Cardiac septum (tissue), 1 donor: ENCODE measurements at regions of chr12 and their contacts with region 1.

Region 1: DNA sequence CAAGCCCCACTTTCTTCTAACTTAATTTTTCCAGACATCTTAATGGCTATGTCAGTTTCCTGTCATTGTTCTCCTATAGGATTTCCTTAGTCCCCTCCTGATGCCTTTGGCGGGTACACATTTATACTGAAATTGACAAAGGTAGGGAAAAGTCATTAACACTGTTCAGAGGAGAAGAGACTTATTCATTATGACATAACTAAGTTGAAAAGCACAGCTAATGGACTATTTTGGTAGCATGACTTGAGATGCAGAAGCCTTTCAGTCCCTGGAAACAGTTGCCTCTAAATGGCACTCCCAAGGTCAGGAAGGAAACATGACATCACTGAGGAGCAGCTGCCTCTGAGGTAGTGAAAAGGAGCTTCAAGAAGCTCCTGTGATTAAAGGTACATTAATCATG is 317.5 kb upstream of the KITLG start:
- DNase-seq: no peak

Region 2: DNA sequence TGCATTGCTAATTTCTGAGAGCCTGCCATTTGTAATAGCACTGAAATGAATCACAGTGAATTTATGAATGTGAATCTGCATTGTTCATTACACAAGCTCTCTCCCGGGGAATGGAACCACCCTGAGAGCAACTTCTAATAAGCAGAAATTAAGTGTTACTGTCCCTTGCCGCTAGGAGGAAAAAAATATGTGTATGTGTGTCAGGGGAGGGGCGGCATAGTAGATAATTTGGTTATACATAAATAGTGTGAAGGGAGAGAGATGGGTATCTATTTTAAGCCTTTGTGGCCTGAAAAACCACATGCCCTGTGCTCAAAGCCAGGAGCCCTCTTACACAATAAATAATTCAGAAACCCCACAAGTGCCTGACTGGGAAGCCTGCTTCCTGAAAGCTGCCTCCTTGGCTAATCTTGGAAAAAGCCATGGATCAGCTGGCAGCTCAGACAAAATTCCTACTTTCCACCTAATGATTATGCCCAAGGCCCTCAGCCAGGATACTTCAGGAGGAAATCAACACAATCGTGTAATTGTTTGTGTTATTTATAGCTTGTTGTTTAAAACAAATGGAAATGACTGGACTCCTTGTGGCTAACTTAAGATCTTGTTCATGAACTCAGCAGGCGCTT is 48.8 kb after region 1 on chr12:
- intact Hi-C with region 1: loop called (anchors 1 kb)
- DNase-seq: no peak

Region 3: GRCh38 chr12:89084751-89085150 is 187.0 kb after region 1 on chr12:
- intact Hi-C with region 1: no loop called
- DNase-seq: no peak